Posterior cingulate gyrus (tissue), 11 donors: ENCODE measurements at regions of chr1 and their contacts with region 1.

Region 1: GRCh38 chr1:174262349-174263241 is 103.3 kb downstream of the RABGAP1L start:
- DNase-seq: peak in 6 of 10 donors; percentile 17 to 84 (median 31)

Region 2: GRCh38 chr1:174726167-174726879 is 463.7 kb after region 1 on chr1:
- intact Hi-C with region 1: loop called (anchors 1 kb)
- DNase-seq: no peak

Region 3: GRCh38 chr1:174743654-174744561 is 481.3 kb after region 1 on chr1:
- intact Hi-C with region 1: loop called (anchors 2 kb)
- DNase-seq: no peak